Activated T-helper 2 cell treated with anti-CD3 and anti-CD28 coated beads, Interferon-gamma antibody, Interleukin-2, Interleukin-4, amounts not matched to agents 10 μg/mL and 5 μg/mL and 100 μg/mL, durations not matched to agents 14 hours and 24 hours and 36 hours (primary cell): ENCODE measurements at regions of chr5 and their contacts with region 1.

Region 1: GRCh38 chr5:118791926-118792734 is 196.2 kb downstream of the DTWD2 start:
- DNase-seq: no peak
- H3K4me3 Mint-ChIP-seq: no peak overlapping the region
- H3K27ac Mint-ChIP-seq: no peak overlapping the region
- H3K4me1 Mint-ChIP-seq: no peaks in the 10 kb centered on the region
- H3K27me3 Mint-ChIP-seq: peaks cover 2% of the 10 kb centered on the region

Region 2: DNA sequence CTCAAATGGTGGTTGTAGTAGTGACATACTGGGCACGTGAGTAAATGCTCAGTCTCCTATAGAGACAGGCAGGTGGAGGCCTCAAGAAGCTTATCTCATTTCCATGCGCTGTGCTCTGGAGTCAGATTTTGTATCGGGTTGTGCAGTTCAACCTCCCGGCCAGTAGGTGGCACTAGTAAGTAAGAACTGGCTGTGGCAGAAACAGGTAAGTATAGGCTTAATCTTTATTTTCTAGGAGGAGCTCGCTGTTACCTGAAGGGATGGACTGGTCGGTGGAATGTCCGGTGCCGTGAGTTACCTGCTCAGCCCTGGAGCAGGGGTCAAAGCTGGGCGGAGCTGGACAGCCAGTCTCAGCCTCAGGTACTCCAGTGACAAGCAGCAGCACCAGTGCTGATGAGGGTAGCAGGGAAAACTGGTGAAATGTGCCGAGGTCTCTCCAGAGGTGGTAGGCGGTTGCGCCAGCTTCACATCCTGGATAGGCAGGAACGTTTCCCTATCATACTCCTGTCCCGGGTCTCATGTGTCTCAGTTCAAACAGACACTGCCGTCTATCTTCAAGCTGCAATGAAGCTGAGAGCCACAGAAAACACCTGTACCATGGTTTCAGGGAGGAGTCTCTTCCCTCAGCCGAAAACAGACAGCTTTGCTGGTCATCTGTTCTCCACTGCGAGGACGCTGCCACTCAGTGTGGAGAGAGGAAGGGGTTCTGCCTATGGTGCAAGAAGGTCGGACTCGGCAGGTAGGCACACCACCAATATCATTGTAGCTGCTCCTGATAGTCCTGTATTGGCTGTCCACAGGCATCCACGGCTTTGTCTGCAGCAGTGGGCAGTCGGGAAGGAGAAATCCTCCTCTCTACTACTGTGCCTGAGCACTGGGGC is 1337.2 kb before region 1 on chr5:
- intact Hi-C with region 1: loop called (anchors 5 kb)
- DNase-seq: peak; percentile 35
- H3K4me3 Mint-ChIP-seq: peak overlapping the region; percentile 56
- H3K27ac Mint-ChIP-seq: no peak overlapping the region
- H3K4me1 Mint-ChIP-seq: peaks cover 6% of the 10 kb centered on the region
- H3K27me3 Mint-ChIP-seq: no peaks in the 10 kb centered on the region